Activated CD4-positive, alpha-beta memory T cell treated with anti-CD3 and anti-CD28 coated beads for 36 hours (primary cell): ENCODE measurements at regions of chr15 and their contacts with region 1.

Region 1: GRCh38 chr15:63212050-63213004 is 22.9 kb downstream of the RAB8B start:
- DNase-seq: no peak
- H3K4me3 Mint-ChIP-seq: peak overlapping the region; percentile 64
- H3K27ac Mint-ChIP-seq: peak overlapping the region; percentile 97
- H3K4me1 Mint-ChIP-seq: peaks cover 83% of the 10 kb centered on the region
- H3K27me3 Mint-ChIP-seq: no peaks in the 10 kb centered on the region

Region 2: GRCh38 chr15:63172376-63173109 is 39.8 kb before region 1 on chr15:
- CTCF ChIA-PET with region 1: interaction called, 3 read pairs
- POLR2A ChIA-PET with region 1: interaction called, 3 read pairs
- intact Hi-C with region 1: loop called (anchors 1 kb)
- DNase-seq: no peak
- H3K4me3 Mint-ChIP-seq: no peak overlapping the region
- H3K27ac Mint-ChIP-seq: no peak overlapping the region
- H3K4me1 Mint-ChIP-seq: peaks cover 11% of the 10 kb centered on the region
- H3K27me3 Mint-ChIP-seq: no peaks in the 10 kb centered on the region

Region 3: GRCh38 chr15:63232405-63232804 is 20.1 kb after region 1 on chr15:
- CTCF ChIA-PET with region 1: interaction called, 4 read pairs
- POLR2A ChIA-PET with region 1: no interaction called
- intact Hi-C with region 1: loop called (anchors 2 kb)
- DNase-seq: no peak
- H3K4me3 Mint-ChIP-seq: no peak overlapping the region
- H3K27ac Mint-ChIP-seq: peak overlapping the region; percentile 79
- H3K4me1 Mint-ChIP-seq: peaks cover 75% of the 10 kb centered on the region
- H3K27me3 Mint-ChIP-seq: no peaks in the 10 kb centered on the region